ENCODE measurements at regions of chr5 and their contacts with region 1.

Region 1: GRCh38 chr5:5787373-5787772 is 364.9 kb downstream of the ICE1 start:
- DNase-seq: no peak
- H3K4me3 ChIP-seq: no peak overlapping the region
- CTCF ChIP-seq: no peak
- POLR2A ChIP-seq: no peak

Region 2: GRCh38 chr5:6003040-6003825 is 215.9 kb after region 1 on chr5:
- intact Hi-C with region 1: no loop called
- DNase-seq: no peak
- H3K4me3 ChIP-seq: no peak overlapping the region
- CTCF ChIP-seq: no peak
- POLR2A ChIP-seq: no peak

Region 3: DNA sequence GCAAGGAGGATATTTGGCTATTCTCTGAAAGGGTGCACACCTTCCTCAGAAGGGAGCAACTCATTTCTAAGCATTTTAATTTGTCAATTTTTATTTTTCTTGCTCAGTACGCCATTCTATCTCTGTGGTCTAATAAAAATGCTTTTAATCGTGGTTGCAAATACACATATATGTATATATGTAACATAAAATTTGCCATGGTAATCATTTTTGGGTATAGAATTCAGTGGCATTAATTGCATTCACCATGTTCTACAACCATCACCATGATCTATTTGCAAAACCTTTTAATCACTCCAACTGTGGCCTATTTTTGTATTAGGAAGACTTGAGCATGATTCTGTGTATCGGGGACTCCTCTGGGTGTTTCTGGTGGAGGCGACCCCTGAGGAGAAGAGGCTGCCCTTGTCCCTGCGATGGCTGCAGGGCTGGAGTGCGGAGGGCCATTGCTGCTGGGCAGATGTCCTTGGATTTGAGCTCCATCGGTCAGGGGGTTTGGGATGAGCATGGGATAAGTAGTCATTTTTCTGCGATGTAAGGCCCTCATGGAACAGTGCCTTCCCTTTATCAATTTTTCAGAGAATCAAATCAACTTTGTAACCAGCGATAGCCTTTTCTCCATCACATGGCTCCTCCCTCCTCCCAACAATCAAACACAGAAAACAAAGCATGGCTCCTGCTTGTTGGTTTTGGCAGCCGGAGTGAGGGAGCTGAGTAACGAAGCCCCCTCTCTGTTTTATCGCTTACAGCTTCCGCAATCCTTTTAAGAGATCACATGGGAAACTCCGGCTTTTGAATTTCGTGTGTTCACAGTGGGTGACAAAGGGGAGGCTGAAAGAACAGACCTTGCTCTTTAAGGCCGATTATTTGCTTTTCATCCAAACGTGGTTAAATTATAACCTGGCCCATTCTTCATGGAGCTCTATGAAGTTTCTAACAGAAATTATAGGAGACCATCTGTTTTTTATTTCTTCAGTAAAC is 1113.2 kb after region 1 on chr5:
- intact Hi-C with region 1: loop called (anchors 5 kb)
- DNase-seq: no peak
- H3K4me3 ChIP-seq: no peak overlapping the region
- CTCF ChIP-seq: no peak
- POLR2A ChIP-seq: no peak

Measured in lower leg skin (tissue), 4 donors.